CD14-positive monocyte (primary cell): ENCODE measurements at regions of chr4 and their contacts with region 1.

Region 1: DNA sequence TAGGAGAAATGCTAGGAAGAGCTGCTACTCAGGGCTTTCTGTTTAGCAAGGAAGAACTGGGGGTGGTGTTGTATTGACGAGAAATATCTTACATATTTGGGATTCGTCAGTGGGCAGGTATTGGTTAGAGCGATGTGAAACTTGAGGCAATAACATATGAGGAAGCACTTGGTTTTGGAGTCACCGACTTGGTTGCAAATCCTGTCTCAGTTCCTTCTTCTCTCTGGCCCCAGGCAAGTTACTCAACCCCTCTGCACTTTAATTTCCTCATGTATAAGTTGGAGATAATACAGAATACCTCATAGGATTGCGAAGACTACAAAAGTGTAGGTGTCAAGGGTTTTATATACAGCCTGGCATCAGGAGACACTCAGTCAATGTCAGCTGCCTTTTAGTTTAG is 34.1 kb downstream of the GPAT3 start:
- DNase-seq: peak; percentile 89 to 97 (median 96)
- H3K4me3 ChIP-seq: peak overlapping the region in 2 of 3 experiments; percentile 48 to 65
- H3K4me3 Mint-ChIP-seq: peak overlapping the region; percentile 62 to 89
- H3K27ac ChIP-seq: peak overlapping the region; percentile 87 to 89
- H3K27ac Mint-ChIP-seq: peak overlapping the region; percentile 91 to 99 (median 98)
- H3K4me1 ChIP-seq: peaks cover 37 to 50% of the 10 kb centered on the region in 2 donors
- H3K4me1 Mint-ChIP-seq: peaks cover 48% of the 10 kb centered on the region
- H3K27me3 ChIP-seq: no peaks in the 10 kb centered on the region
- H3K27me3 Mint-ChIP-seq: peaks cover 0 to 1% (median 0%) of the 10 kb centered on the region in 3 donors
- CTCF ChIP-seq: no peak

Region 2: DNA sequence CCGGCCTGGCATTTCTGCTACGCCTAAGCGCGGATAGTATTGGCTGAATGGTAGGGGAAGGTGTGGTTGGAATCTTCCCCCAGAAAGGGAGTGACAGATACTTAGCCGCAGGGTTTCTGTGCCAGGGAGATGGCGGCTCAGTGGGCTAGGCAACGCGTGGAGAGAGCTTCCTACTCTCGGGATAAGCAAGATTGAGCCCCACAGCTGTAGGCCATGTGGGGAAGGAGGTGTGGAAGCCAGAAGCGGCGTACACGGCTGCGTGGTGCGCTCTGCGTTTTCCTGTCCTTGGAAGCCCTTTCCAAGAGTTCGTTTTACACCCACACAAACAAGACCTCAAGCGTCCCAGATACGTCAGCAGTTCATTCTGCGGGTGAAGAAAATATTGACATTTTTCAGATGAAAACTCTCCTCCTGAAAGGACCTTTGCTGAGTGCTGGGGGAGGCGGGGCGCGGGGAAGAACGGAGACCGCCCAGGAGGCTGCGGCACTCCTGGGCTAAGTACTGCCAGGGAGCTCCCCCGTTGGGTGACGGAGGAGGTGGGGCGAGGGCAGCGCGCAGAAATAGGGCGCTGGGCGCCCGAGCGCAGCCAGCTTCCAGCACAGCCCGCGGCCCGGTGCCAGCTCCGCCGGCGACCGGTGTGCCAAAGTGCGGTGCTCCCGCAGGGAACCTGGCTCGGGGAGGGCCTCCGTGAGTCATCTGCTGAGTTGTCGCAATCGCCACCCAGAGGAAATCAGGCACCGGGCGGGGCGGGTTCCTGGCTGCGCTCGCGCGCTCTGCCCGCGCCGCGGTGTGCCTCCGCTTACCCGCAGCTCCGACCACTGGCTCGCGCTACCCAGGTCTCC is 34.2 kb before region 1 on chr4 and contains the start of gene GPAT3:
- intact Hi-C with region 1: loop called (anchors 5 kb)
- DNase-seq: peak; percentile 76 to 86 (median 84)
- H3K4me3 ChIP-seq: peak within 1 kb of the TSS; percentile 80 to 93 (median 84)
- H3K4me3 Mint-ChIP-seq: peak within 1 kb of the TSS; percentile 96 to 97
- H3K27ac ChIP-seq: peak within 1 kb of the TSS; percentile 60 to 96
- H3K27ac Mint-ChIP-seq: peak within 1 kb of the TSS; percentile 84 to 93 (median 91)
- H3K4me1 ChIP-seq: peaks cover 32 to 42% of the 10 kb centered on the region in 2 donors
- H3K4me1 Mint-ChIP-seq: peaks cover 42% of the 10 kb centered on the region
- H3K27me3 ChIP-seq: peaks cover 13 to 22% of the 10 kb centered on the region in 2 donors
- H3K27me3 Mint-ChIP-seq: peaks cover 21 to 35% (median 25%) of the 10 kb centered on the region in 3 donors
- CTCF ChIP-seq: no peak
- polyA plus RNA-seq, gene GPAT3: 20.9 to 46.2 (median 44.2) TPM